ENCODE measurements at regions of chr10 and their contacts with region 1.

Region 1: DNA sequence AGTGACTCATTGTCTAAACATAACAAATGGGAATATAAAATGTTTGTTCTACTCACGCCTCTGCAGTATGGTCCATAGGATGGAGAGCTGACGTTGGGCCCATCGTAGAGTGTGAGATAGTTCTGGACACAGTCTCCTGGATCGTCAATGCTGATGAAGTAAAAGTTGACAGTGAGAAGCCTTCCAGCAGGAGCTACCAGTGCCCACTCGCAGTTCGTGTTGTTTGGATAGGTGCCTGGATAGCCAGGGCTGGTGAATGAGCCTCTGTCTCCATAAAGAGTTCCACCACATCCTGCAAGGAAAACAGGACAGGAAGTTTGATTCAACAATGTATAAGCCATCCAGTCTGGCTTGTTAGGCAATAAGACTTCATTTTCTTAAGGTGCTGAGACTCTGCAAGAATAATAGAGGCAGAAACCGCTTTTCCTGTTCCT is 79.6 kb downstream of the OR13A1 start:
- DNase-seq: no peak
- H3K4me3 ChIP-seq: no peak overlapping the region
- H3K27ac ChIP-seq: no peak overlapping the region
- H3K4me1 ChIP-seq: no peaks in the 10 kb centered on the region
- H3K27me3 ChIP-seq: no peaks in the 10 kb centered on the region
- CTCF ChIP-seq: no peak
- EP300 ChIP-seq: no peak
- RAD21 ChIP-seq: no peak

Region 2: DNA sequence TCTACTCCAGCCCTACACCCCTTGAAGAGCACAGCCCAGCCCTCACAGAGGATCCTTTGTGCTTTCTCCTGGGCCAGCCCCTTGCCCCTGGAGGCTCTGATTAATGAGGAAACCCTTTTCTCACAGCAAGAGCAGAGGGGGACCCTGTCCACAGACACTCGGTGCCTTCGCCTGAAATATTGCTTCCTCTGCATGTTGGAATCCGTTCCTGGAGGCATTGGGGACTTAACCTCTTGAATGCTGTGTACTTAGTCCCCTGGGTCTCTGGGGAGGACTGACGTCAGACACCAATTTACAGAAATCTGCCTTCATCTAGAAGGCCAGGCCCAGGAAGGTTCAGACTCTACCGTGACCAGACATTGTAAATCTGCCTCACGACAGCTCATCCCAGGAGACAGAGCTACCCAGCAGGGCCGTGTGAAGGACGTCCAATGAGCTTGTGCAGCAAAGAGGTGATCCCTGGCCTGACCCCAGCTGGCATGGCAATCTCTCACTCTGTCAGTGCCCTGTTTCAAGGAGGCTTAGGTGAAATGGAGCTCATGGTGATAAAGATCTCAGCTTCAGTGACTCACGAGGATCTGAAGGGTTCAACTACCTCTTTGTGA is 332.8 kb before region 1 on chr10:
- CTCF ChIA-PET with region 1: no interaction called
- POLR2A ChIA-PET with region 1: no interaction called
- DNase-seq: no peak
- H3K4me3 ChIP-seq: no peak overlapping the region
- H3K27ac ChIP-seq: no peak overlapping the region
- H3K4me1 ChIP-seq: no peaks in the 10 kb centered on the region; a peak in 1 of 4 replicates
- H3K27me3 ChIP-seq: peaks cover 74% of the 10 kb centered on the region; the same call in 1 of the 2 replicates
- CTCF ChIP-seq: no peak
- EP300 ChIP-seq: no peak
- RAD21 ChIP-seq: no peak

Region 3: DNA sequence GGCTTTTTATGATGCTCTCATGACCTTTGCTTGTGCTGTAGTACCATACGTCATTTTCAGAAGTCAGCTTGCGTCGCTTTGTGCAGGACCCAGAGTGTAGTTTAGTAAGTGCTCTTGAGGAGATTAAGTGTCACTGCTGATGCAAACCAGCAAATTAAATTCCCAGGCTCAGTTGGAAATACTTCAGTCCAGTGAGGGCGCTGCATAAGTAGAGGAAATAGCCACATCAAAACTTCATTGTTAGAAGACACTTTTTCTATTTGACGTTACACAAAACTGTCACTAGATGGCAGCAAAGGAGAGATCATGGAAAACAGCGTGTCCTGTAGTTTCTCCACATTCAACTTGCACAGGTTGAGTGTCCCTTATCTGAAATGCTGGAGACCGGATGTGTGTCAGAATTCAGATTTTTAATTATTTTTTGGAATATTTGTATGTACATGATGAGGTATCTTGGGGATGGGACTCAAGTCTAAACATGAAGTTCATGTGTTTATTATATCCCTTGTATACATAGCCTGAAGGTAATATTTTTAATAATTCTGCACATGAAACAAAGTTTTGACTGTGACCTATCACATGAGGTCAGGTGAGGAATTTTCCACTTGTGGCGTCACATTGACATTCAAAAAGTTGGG is 227.2 kb before region 1 on chr10:
- CTCF ChIA-PET with region 1: interaction called, 10 read pairs
- POLR2A ChIA-PET with region 1: no interaction called
- DNase-seq: peak; percentile 57
- H3K4me3 ChIP-seq: no peak overlapping the region; a peak in 1 of 4 replicates
- H3K27ac ChIP-seq: peak overlapping the region; percentile 6 to 16; a peak in 2 of 4 replicates
- H3K4me1 ChIP-seq: peaks cover 0 to 3% of the 10 kb centered on the region in 2 experiments; a peak in 2 of 4 replicates
- H3K27me3 ChIP-seq: no peaks in the 10 kb centered on the region
- CTCF ChIP-seq: peak; percentile 87
- EP300 ChIP-seq: no peak
- RAD21 ChIP-seq: peak; percentile 87

Region 4: GRCh38 chr10:45224219-45224841 is 11.5 kb before region 1 on chr10:
- CTCF ChIA-PET with region 1: interaction called, 11 read pairs
- POLR2A ChIA-PET with region 1: no interaction called
- DNase-seq: no peak
- H3K4me3 ChIP-seq: no peak overlapping the region
- H3K27ac ChIP-seq: no peak overlapping the region
- H3K4me1 ChIP-seq: no peaks in the 10 kb centered on the region
- H3K27me3 ChIP-seq: peaks cover 35% of the 10 kb centered on the region; the same call in 1 of the 2 replicates
- CTCF ChIP-seq: no peak
- EP300 ChIP-seq: no peak
- RAD21 ChIP-seq: no peak

Measured in SK-N-SH (cell line).